ENCODE measurements at regions of chr1 and their contacts with region 1.

Region 1: DNA sequence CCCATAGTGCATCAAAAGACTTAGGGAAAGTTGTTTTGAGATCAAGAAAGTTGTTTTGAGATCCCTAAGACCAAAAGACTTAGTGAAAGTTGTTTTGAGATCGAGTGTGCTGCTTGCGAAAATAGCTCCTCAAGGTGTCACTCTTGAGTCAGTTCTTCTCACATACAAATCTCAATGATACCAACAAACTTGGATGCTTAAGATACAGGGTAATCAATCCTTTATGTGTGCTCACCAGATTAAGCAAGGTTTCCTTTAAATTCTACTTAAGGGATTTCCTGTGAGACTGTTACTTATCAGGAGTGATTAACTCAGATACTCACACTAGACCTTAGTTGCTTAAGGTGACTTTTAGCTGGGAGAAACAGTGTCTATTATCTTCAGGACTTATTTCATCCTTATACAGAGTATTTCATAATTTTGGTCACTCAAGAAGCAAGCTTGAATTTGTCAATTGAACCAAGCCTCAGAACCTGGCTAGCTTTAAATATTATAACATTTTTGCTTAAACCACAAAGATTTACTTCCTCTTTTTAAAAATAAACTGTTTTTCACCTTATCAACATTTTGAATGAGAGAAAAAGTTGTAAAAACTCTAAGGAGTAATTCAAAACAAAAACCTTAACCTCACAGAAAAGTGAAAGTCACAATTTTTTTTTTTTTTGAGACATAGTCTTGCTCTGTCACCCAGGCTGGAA is 8.0 kb upstream of the RLF start:
- DNase-seq: peak; percentile 32

Region 2: GRCh38 chr1:40247655-40248054 is 94.4 kb after region 1 on chr1 and contains the start of gene TMCO2:
- in situ Hi-C with region 1: no loop called
- DNase-seq: no peak
- total RNA-seq, gene TMCO2: not detected in 2 replicates

Region 3: GRCh38 chr1:40495315-40495903 is 342.2 kb after region 1 on chr1:
- in situ Hi-C with region 1: loop called (anchors 10 kb)
- DNase-seq: peak; percentile 17

Measured in Caki2 (cell line).